Thyroid gland (tissue), 4 donors: ENCODE measurements at regions of chr7 and their contacts with region 1.

Region 1: GRCh38 chr7:90455163-90456030 is 14.0 kb upstream of the PTTG1IP2 start:
- DNase-seq: no peak
- H3K4me3 ChIP-seq: no peak overlapping the region
- H3K27ac ChIP-seq: no peak overlapping the region
- H3K4me1 ChIP-seq: peaks cover 5 to 8% of the 10 kb centered on the region in 2 donors
- H3K27me3 ChIP-seq: no peaks in the 10 kb centered on the region
- CTCF ChIP-seq: peak; percentile 23 to 86 (median 66)
- POLR2A ChIP-seq: no peak

Region 2: DNA sequence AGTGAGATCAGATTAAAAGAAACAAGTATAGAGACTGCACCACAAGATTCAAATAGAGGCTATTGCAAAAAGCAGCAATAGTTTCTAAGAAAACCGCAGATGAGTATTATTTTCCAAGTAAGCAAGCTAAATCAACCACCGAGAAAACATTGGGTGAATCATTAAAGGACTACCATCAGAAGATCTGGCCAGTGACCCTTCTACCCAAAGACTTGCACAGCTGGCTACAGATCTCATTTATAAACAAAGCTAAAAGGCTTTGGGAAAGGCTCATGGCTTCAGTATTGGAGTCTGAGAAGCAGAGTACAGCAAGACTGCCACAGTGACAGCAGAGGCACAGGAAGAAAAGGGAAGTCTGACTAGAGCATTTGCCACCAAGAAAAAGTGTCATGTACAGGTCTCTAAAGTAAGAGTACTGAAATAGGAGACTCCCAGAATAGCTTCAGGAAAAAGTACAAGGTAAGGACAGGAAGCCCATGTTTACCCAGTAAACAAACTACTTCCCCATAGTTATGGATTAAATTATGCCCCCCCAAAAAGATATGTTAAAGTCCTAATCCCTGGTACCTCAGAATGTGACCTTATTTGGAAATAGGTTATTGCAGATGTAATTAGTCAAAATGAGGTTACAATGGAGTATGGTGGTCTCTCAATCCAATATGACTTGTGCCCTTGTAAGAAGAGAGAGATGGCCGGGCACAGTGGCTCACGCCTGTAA is 282.1 kb before region 1 on chr7:
- intact Hi-C with region 1: no loop called
- DNase-seq: no peak
- H3K4me3 ChIP-seq: no peak overlapping the region
- H3K27ac ChIP-seq: no peak overlapping the region
- H3K4me1 ChIP-seq: no peaks in the 10 kb centered on the region
- H3K27me3 ChIP-seq: no peaks in the 10 kb centered on the region
- CTCF ChIP-seq: no peak
- POLR2A ChIP-seq: no peak

Region 3: DNA sequence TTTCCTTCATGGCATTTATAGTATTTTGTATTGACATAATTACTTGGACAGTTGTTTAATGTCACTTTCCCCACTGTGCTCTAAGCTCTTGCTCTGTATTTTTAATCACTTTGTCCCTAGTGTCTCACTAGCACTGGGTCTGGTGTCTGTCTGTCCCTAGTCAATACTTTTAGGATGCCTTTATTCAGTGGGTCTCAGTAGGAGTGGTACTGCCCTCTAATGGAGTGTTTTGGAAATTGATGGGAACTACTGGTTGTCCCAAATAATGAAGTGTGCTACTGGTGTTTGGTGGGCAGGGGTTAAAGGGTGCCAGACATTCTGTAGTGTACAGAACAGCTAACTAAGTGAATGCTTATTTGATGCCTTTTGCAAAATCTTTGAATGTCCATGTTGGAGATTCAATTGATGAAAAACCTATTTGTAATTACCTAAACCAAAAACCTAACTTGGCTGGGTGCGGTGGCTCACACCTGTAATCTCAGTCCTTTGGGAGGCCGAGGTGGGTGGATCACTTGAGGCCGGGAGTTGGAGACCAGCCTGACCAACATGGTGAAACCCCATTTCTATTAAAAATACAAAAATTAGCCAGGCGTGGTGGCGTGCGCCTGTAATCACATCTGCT is 174.0 kb after region 1 on chr7:
- intact Hi-C with region 1: loop called (anchors 10 kb)
- DNase-seq: no peak
- H3K4me3 ChIP-seq: no peak overlapping the region
- H3K27ac ChIP-seq: no peak overlapping the region
- H3K4me1 ChIP-seq: peaks cover 4 to 12% of the 10 kb centered on the region in 2 donors
- H3K27me3 ChIP-seq: no peaks in the 10 kb centered on the region
- CTCF ChIP-seq: peak in 5 of 6 experiments; percentile 11 to 54 (median 48)
- POLR2A ChIP-seq: no peak

Region 4: DNA sequence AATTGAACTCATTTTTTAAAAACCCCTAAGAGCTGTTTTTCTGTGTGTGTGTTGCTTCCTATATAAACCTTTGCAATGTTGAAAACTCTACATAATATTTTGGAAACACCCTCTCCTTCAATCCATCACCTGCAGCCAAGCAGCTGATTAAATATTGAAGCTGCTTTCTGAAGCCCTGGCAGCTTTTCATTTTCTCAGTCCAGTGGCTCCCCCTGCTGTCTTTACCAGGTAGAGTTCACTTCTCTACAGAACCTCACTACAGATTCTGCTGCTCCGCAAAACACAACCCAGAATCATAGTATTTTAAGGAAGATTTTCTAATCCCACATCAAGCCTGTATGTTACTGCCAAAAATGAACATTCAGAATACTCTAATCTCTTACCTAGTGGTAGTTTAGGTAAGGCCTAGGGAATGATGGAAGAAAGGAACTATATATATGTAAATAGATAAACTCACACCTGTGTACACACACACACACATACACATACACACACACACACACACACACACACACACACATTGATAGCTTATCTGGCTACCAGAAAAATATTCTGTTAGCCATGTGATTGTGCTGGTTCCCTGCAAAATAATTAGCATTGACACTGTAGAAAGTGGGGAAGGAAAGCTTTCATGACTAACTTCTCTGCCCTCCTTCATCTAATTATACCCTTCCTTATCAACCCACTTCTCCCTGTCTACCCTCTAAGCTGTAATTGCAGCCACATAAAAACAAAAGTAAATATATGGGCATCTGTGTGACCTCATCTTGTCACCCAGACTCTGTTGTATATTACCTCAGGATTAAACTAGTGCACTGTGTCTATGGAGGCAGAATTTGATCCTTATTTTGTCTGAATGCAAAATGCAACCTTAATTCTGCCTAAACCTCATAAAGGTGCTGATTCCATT is 579.3 kb after region 1 on chr7:
- intact Hi-C with region 1: loop called (anchors 10 kb)
- DNase-seq: peak; percentile 63 to 74
- H3K4me3 ChIP-seq: no peak overlapping the region
- H3K27ac ChIP-seq: no peak overlapping the region
- H3K4me1 ChIP-seq: no peaks in the 10 kb centered on the region
- H3K27me3 ChIP-seq: no peaks in the 10 kb centered on the region
- CTCF ChIP-seq: peak in 5 of 6 experiments; percentile 9 to 77 (median 71)
- POLR2A ChIP-seq: no peak